CD4-positive, alpha-beta memory T cell (primary cell): ENCODE measurements at regions of chr5 and their contacts with region 1.

Region 1: DNA sequence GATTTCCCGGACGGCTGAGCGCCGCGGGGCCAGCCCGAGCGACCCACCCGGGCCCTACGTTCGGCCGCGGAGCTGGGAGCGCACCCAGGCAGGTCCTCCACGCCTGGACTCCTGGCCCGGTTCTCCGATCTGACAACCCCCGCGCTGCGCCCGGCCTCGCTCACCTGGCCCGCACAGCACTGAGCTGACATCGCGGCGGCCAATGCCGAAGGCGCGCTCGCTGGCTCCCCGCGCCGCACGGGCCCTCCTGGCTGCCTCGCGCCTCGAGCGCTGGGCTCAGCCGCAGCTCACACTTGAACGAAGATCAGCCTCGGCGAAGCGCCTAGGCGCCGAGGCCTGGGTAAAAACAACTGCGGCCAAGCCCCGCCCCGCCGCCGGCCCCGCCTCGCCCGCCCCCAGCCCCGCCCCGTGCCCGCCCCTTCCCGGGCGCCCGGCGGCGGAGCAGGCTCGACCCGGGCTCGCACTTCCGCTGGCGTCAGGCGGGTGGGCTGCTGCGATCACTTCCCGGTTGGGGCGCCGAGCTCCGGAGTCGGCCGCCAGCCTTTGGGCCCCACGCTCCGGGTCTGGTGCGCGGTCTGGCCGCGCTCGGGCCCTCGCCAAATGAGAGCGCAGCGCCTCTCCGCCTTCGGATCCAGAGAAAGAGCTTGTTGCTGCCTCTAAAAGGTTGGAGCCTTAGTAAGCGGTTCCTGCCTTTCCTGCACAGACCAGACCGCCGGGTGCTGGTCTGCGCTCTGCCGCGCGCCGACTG is at the start of gene SERINC5:
- DNase-seq: peak; percentile 82 to 88 (median 84)
- H3K4me3 ChIP-seq: peak within 1 kb of the TSS; percentile 73 to 80
- H3K4me3 Mint-ChIP-seq: peak within 1 kb of the TSS; percentile 92 to 100 (median 96)
- H3K27ac ChIP-seq: peak within 1 kb of the TSS; percentile 92
- H3K27ac Mint-ChIP-seq: peak within 1 kb of the TSS; percentile 88 to 99 (median 96)
- H3K4me1 ChIP-seq: peaks cover 40% of the 10 kb centered on the region
- H3K4me1 Mint-ChIP-seq: peaks cover 30 to 60% (median 50%) of the 10 kb centered on the region in 4 donors
- H3K27me3 ChIP-seq: no peaks in the 10 kb centered on the region
- H3K27me3 Mint-ChIP-seq: no peaks in the 10 kb centered on the region
- total RNA-seq, gene SERINC5: 153 to 165 TPM

Region 2: DNA sequence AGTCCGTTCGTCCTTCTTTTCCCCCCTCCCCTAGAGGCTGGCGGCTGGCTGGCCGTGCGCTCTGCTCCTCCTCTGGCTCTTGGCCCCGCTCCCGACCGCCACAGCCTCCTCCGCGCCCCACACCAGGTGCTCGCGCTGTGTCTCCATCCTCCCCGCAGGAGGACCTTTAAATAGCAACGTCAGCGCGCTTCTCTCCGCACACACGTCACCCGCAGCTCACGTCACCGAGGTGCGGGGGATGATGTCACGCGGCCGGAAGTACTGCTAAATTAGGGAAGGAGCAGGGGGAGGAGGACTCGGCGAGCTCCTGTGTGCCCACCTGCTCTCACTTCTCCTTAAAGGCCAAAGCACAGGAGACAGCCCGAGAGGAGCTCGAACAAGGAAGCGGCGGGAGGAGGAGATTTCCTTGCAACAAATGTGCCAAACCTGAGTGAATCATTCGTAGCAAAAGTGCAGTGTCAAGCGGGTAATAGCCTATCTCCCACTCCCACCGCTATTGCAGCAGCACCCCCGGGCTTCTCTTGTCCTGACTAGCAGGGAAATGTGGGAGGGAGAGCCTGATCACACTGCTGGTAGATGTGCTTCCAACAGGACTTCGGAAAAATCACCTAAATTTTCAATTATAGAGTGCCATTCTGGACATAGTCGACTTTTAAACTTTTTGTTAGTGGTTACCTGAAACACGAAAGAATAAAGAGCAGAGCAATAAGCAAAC is 741.4 kb before region 1 on chr5:
- CTCF ChIA-PET with region 1: no interaction called
- POLR2A ChIA-PET with region 1: no interaction called
- intact Hi-C with region 1: loop called (anchors 5 kb)
- DNase-seq: peak; percentile 90 to 93 (median 92)
- H3K4me3 ChIP-seq: peak overlapping the region; percentile 71 to 84
- H3K4me3 Mint-ChIP-seq: peak overlapping the region; percentile 96 to 99 (median 96)
- H3K27ac ChIP-seq: peak overlapping the region; percentile 82
- H3K27ac Mint-ChIP-seq: peak overlapping the region; percentile 94 to 100 (median 99)
- H3K4me1 ChIP-seq: peaks cover 18% of the 10 kb centered on the region
- H3K4me1 Mint-ChIP-seq: peaks cover 13 to 25% (median 16%) of the 10 kb centered on the region in 4 donors
- H3K27me3 ChIP-seq: peaks cover 9% of the 10 kb centered on the region
- H3K27me3 Mint-ChIP-seq: peaks cover 15 to 18% of the 10 kb centered on the region in 2 donors

Region 3: GRCh38 chr5:80125962-80126480 is 129.9 kb before region 1 on chr5:
- CTCF ChIA-PET with region 1: interaction called, 6 read pairs
- POLR2A ChIA-PET with region 1: interaction called, 38 read pairs
- intact Hi-C with region 1: no loop called
- DNase-seq: peak in 1 of 5 donors; percentile 33
- H3K4me3 ChIP-seq: no peak overlapping the region
- H3K4me3 Mint-ChIP-seq: peak overlapping the region in 7 of 8 donors; percentile 8 to 82 (median 44)
- H3K27ac ChIP-seq: no peak overlapping the region
- H3K27ac Mint-ChIP-seq: peak overlapping the region; percentile 10 to 85 (median 64)
- H3K4me1 ChIP-seq: peaks cover 37% of the 10 kb centered on the region
- H3K4me1 Mint-ChIP-seq: peaks cover 47 to 67% (median 55%) of the 10 kb centered on the region in 4 donors
- H3K27me3 ChIP-seq: no peaks in the 10 kb centered on the region
- H3K27me3 Mint-ChIP-seq: no peaks in the 10 kb centered on the region

Region 4: DNA sequence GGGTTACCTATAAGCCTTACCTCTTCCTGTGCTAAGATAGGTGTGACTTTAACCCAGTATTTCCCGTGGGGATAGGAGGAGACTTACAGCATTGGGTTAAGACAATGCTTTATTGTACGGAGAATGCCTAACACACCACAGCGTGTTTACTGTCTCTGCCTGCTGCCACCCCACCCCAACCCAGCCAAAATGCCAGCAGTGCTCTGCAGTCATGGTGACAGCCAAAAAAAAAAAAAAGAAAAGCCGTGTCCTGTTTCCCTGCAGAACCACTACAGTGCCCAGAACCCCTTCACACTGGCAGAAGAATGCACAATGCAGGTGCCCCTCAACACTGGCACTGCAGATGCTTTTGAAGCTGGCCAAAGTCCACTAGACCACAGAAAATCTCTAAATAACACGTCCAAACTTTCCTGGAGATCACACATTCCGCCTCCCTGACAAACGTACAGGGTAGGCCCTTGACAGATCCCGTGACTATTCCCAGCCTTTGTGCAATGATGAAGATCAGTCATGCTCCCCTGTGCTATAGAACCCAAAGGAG is 102.2 kb before region 1 on chr5:
- CTCF ChIA-PET with region 1: interaction called, 6 read pairs
- POLR2A ChIA-PET with region 1: interaction called, 33 read pairs
- intact Hi-C with region 1: no loop called
- DNase-seq: peak in 4 of 5 donors; percentile 45 to 58 (median 50)
- H3K4me3 ChIP-seq: no peak overlapping the region
- H3K4me3 Mint-ChIP-seq: peak overlapping the region in 7 of 8 donors; percentile 66 to 85 (median 79)
- H3K27ac ChIP-seq: no peak overlapping the region
- H3K27ac Mint-ChIP-seq: peak overlapping the region; percentile 83 to 97 (median 96)
- H3K4me1 ChIP-seq: peaks cover 57% of the 10 kb centered on the region
- H3K4me1 Mint-ChIP-seq: peaks cover 48 to 81% (median 62%) of the 10 kb centered on the region in 4 donors
- H3K27me3 ChIP-seq: no peaks in the 10 kb centered on the region
- H3K27me3 Mint-ChIP-seq: no peaks in the 10 kb centered on the region

Region 5: GRCh38 chr5:80181618-80182211 is 74.2 kb before region 1 on chr5:
- CTCF ChIA-PET with region 1: interaction called, 23 read pairs
- POLR2A ChIA-PET with region 1: interaction called, 409 read pairs
- intact Hi-C with region 1: loop called (anchors 1 kb)
- DNase-seq: peak; percentile 79 to 84 (median 81)
- H3K4me3 ChIP-seq: peak overlapping the region in 1 of 2 donors; percentile 5
- H3K4me3 Mint-ChIP-seq: peak overlapping the region; percentile 28 to 76 (median 69)
- H3K27ac ChIP-seq: peak overlapping the region; percentile 48
- H3K27ac Mint-ChIP-seq: peak overlapping the region; percentile 89 to 97 (median 95)
- H3K4me1 ChIP-seq: peaks cover 97% of the 10 kb centered on the region
- H3K4me1 Mint-ChIP-seq: peaks cover 67 to 91% (median 84%) of the 10 kb centered on the region in 4 donors
- H3K27me3 ChIP-seq: no peaks in the 10 kb centered on the region
- H3K27me3 Mint-ChIP-seq: no peaks in the 10 kb centered on the region

Region 6: DNA sequence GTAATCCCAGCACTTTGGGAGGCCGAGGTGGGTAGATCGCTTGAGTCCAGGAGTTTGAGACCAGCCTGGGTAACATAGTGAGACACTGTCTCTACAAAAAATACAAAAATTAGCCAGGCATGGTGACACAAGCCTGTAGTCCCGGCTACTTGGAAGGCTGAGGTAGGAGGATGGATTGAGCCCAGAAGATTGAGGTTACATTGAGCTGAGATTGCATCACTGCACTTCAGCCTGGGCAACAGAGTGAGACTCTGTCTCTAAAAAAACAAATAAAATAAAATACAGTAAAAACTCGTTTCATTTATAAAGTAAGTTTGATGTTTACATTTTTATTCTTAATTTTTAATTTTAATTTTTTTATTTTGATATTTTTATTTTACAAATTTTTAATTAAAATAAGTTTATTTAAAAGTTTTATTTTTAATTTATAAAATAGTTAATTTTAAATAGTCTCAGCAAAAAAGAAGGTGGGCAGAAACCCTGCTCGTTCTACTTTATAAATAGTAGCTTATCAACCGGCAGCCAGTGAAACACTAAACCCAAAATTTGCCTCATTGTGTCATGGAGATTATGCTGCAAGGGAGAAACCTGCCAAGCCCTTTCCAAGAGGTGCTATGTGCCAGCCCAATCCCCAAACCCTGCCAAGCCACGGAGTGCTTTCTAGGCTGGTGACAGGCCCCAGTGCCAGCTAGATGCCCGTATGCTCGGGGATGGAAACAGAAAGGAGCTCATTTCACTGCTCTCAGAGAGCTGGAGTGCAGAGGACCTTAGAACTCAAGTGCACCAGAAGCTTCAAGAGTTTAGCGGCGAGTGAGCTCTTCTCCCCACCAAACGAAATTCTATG is 38.9 kb before region 1 on chr5:
- CTCF ChIA-PET with region 1: interaction called, 14 read pairs
- POLR2A ChIA-PET with region 1: interaction called, 33 read pairs
- intact Hi-C with region 1: no loop called
- DNase-seq: peak in 1 of 5 donors; percentile 55
- H3K4me3 ChIP-seq: peak overlapping the region in 1 of 2 donors; percentile 25
- H3K4me3 Mint-ChIP-seq: peak overlapping the region in 7 of 8 donors; percentile 46 to 96 (median 81)
- H3K27ac ChIP-seq: peak overlapping the region; percentile 37
- H3K27ac Mint-ChIP-seq: peak overlapping the region; percentile 31 to 99 (median 93)
- H3K4me1 ChIP-seq: peaks cover 98% of the 10 kb centered on the region
- H3K4me1 Mint-ChIP-seq: peaks cover 75 to 97% (median 86%) of the 10 kb centered on the region in 4 donors
- H3K27me3 ChIP-seq: no peaks in the 10 kb centered on the region
- H3K27me3 Mint-ChIP-seq: no peaks in the 10 kb centered on the region

Region 7: GRCh38 chr5:80275347-80275746 is 19.4 kb after region 1 on chr5:
- CTCF ChIA-PET with region 1: interaction called, 20 read pairs
- POLR2A ChIA-PET with region 1: interaction called, 184 read pairs
- intact Hi-C with region 1: loop called (anchors 1 kb)
- DNase-seq: peak in 4 of 5 donors; percentile 28 to 39 (median 35)
- H3K4me3 ChIP-seq: no peak overlapping the region
- H3K4me3 Mint-ChIP-seq: no peak overlapping the region
- H3K27ac ChIP-seq: no peak overlapping the region
- H3K27ac Mint-ChIP-seq: peak overlapping the region in 2 of 7 donors; percentile 18 to 75
- H3K4me1 ChIP-seq: peaks cover 14% of the 10 kb centered on the region
- H3K4me1 Mint-ChIP-seq: peaks cover 11 to 31% (median 19%) of the 10 kb centered on the region in 4 donors
- H3K27me3 ChIP-seq: no peaks in the 10 kb centered on the region
- H3K27me3 Mint-ChIP-seq: no peaks in the 10 kb centered on the region

Region 8: GRCh38 chr5:81058121-81058520 is 802.2 kb after region 1 on chr5:
- CTCF ChIA-PET with region 1: no interaction called
- POLR2A ChIA-PET with region 1: no interaction called
- intact Hi-C with region 1: no loop called
- DNase-seq: no peak
- H3K4me3 ChIP-seq: no peak overlapping the region
- H3K4me3 Mint-ChIP-seq: no peak overlapping the region
- H3K27ac ChIP-seq: no peak overlapping the region
- H3K27ac Mint-ChIP-seq: no peak overlapping the region
- H3K4me1 ChIP-seq: peaks cover 11% of the 10 kb centered on the region
- H3K4me1 Mint-ChIP-seq: peaks cover 14 to 51% (median 26%) of the 10 kb centered on the region in 4 donors
- H3K27me3 ChIP-seq: no peaks in the 10 kb centered on the region
- H3K27me3 Mint-ChIP-seq: no peaks in the 10 kb centered on the region